SK-N-SH (cell line): ENCODE measurements at regions of chr10 and their contacts with region 1.

Region 1: GRCh38 chr10:120735773-120736371 is 115.3 kb upstream of the WDR11 start:
- DNase-seq: peak; percentile 22
- H3K4me3 ChIP-seq: no peak overlapping the region; a peak in 1 of 4 replicates
- H3K27ac ChIP-seq: no peak overlapping the region
- H3K4me1 ChIP-seq: no peaks in the 10 kb centered on the region
- H3K27me3 ChIP-seq: no peaks in the 10 kb centered on the region
- CTCF ChIP-seq: peak; percentile 83
- EP300 ChIP-seq: no peak
- RAD21 ChIP-seq: peak; percentile 69

Region 2: GRCh38 chr10:120719333-120719732 is 16.5 kb before region 1 on chr10:
- CTCF ChIA-PET with region 1: interaction called, 13 read pairs
- POLR2A ChIA-PET with region 1: no interaction called
- DNase-seq: no peak
- H3K4me3 ChIP-seq: no peak overlapping the region
- H3K27ac ChIP-seq: no peak overlapping the region
- H3K4me1 ChIP-seq: no peaks in the 10 kb centered on the region
- H3K27me3 ChIP-seq: no peaks in the 10 kb centered on the region
- CTCF ChIP-seq: no peak
- EP300 ChIP-seq: no peak
- RAD21 ChIP-seq: no peak

Region 3: GRCh38 chr10:120746001-120746777 is 10.3 kb after region 1 on chr10:
- CTCF ChIA-PET with region 1: interaction called, 32 read pairs
- POLR2A ChIA-PET with region 1: no interaction called
- DNase-seq: peak; percentile 41
- H3K4me3 ChIP-seq: no peak overlapping the region
- H3K27ac ChIP-seq: no peak overlapping the region
- H3K4me1 ChIP-seq: peaks cover 0 to 4% of the 10 kb centered on the region in 2 experiments; a peak in 2 of 4 replicates
- H3K27me3 ChIP-seq: no peaks in the 10 kb centered on the region
- CTCF ChIP-seq: no peak
- EP300 ChIP-seq: no peak
- RAD21 ChIP-seq: no peak

Region 4: DNA sequence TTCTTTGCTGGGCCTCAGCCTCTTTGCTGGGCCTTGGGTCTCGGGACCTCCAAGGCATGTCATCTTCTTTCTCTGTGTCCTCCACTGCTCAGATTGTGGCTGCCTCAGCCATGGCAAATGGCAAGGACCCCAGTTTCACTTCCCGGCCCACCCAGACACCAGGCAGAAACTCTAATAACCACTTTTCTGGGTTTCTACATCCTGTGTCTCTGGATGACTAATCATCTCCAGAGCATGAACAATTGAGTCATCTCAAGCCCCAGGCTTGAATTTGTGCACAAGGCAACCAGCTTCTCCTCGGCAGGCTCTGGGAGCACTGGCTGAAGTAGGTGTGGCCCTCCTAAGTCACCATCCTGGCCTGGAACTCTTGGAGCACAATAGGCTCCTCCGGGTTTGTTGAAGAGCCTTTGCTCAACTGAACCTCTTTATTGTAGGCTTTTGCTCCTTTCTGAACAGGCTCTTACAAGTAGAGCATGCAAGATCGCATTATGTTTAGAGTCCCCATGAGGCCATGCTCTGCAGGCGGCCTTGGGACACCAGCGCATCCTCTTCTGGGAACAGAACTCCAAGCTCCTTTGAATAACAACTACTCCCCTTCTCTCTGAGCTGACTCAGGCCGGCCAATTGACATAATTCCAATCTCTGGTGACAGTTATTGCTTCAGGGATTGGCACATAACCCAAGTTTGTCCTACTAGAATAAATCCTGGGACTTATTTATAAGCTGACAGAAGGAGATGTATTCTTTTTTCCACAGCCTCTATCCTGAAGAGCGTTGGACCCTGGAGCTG is 333.4 kb after region 1 on chr10:
- CTCF ChIA-PET with region 1: no interaction called
- POLR2A ChIA-PET with region 1: no interaction called
- DNase-seq: no peak
- H3K4me3 ChIP-seq: no peak overlapping the region
- H3K27ac ChIP-seq: no peak overlapping the region
- H3K4me1 ChIP-seq: peaks cover 0 to 5% of the 10 kb centered on the region in 2 experiments; a peak in 1 of 4 replicates
- H3K27me3 ChIP-seq: no peaks in the 10 kb centered on the region
- CTCF ChIP-seq: no peak
- EP300 ChIP-seq: no peak
- RAD21 ChIP-seq: no peak